HEK293 (cell line): ENCODE measurements at regions of chr22 and their contacts with region 1.

Region 1: GRCh38 chr22:24768537-24769374 is 5.8 kb downstream of the PIWIL3 start:
- H3K4me3 ChIP-seq: no peak overlapping the region
- H3K27ac ChIP-seq: no peak overlapping the region
- H3K4me1 ChIP-seq: no peaks in the 10 kb centered on the region
- CTCF ChIP-seq: no peak

Region 2: GRCh38 chr22:24744638-24745037 is 24.1 kb before region 1 on chr22:
- CTCF ChIA-PET with region 1: no interaction called
- POLR2A ChIA-PET with region 1: no interaction called
- H3K4me3 ChIP-seq: no peak overlapping the region
- H3K27ac ChIP-seq: no peak overlapping the region
- H3K4me1 ChIP-seq: no peaks in the 10 kb centered on the region
- CTCF ChIP-seq: no peak

Region 3: DNA sequence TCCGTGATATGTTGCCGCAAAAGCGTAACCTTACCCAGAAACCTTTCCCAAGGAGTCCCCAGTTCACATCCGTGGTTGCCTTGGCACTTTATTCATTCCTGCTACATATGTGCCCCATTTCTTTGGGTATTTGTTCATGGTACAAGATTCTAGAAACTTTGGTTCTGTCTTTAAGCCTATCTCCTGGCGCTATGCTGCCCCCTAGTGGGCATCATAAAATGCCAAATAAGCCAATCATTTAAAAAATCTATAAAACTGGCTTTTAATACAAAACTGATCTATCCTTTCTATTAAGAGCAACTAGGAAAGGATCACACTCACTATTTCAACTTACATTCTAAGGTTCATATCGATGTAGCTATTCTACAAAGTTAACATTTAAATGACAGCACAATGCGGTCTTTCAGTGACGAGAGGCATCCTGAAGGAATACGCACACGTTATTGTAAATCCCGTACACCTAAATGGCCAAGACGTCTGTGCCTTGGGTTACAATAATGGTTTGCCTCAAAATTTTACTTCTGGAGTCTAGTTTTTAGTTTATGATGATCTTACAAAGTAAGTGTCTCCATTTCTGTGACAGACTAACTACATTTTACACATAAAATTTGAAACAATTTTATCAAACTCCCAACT is 10.5 kb before region 1 on chr22:
- CTCF ChIA-PET with region 1: interaction called, 87 read pairs
- POLR2A ChIA-PET with region 1: no interaction called
- H3K4me3 ChIP-seq: no peak overlapping the region
- H3K27ac ChIP-seq: no peak overlapping the region
- H3K4me1 ChIP-seq: no peaks in the 10 kb centered on the region
- CTCF ChIP-seq: peak; percentile 51; the same call in 1 of the 2 replicates

Region 4: DNA sequence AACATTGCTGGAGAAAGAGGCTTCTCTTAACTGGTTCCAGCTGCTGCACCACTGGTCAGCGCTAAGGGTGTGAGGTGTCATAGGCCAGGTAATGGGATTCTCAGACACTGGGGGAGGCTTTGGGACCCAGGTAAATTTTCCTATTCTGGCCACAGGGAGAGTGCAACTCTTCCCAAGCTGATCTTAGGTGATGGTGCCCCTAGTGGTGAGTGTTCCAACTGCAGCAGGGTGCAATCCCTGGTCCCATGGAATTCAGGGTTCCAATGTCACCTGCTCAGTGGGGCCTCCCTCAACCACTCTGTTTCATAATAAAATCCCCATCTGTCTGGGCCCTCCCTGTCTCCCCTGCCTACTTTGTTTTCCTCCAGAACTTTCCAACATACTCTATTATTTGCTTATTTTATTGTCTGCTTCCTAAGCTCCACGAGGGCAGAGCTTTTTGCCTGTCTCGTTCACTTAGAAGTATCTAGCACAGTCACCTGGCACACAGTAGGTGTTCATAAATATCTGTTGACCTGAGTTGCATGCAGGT is 34.3 kb after region 1 on chr22:
- CTCF ChIA-PET with region 1: interaction called, 37 read pairs
- POLR2A ChIA-PET with region 1: interaction called, 3 read pairs
- H3K4me3 ChIP-seq: no peak overlapping the region
- H3K27ac ChIP-seq: no peak overlapping the region
- H3K4me1 ChIP-seq: no peaks in the 10 kb centered on the region
- CTCF ChIP-seq: peak; percentile 82

Region 5: GRCh38 chr22:24834845-24835570 is 66.3 kb after region 1 on chr22:
- CTCF ChIA-PET with region 1: interaction called, 20 read pairs
- POLR2A ChIA-PET with region 1: no interaction called
- H3K4me3 ChIP-seq: no peak overlapping the region
- H3K27ac ChIP-seq: no peak overlapping the region
- H3K4me1 ChIP-seq: no peaks in the 10 kb centered on the region
- CTCF ChIP-seq: peak; percentile 62

Region 6: DNA sequence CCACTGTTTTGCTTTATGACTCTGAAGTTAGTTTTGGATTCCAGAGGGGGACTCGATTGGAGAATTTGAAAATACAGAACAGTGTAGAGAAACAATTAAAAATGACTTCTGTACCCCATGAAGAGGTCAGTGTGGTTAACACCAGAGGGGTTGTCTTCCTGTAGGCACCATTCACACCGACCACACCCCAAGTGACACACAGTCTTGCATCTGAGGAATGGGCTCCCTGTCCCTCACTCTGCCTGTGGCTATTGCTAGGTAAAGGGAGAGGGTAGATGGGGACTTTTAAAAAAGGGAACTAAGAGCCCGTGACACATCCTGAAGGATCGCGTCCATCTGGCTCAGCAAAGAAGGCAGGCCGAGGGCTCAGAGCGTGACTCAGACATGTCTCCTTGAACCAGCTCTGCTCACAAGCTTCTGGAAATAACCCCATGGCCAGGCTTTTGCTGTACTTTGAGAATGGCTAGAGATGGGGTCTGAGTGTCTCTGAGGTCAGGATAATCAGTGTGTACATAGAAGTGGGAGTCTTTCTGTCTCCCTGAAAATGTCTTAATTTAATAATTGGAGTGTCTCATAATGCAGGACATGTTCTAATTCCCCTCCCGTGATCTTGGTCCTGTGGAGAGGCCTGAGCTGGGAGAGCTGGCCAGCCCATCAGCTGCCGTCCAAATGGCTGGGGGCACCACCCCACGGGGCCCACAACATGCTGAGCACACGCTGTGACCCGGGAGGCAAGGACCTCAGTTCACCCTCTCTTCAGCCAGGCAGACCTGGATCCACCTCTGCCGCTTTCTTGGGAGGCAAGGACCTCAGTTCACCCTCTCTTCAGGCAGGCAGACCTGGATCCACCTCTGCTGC is 76.5 kb after region 1 on chr22:
- CTCF ChIA-PET with region 1: interaction called, 121 read pairs
- POLR2A ChIA-PET with region 1: no interaction called
- H3K4me3 ChIP-seq: no peak overlapping the region
- H3K27ac ChIP-seq: no peak overlapping the region
- H3K4me1 ChIP-seq: no peaks in the 10 kb centered on the region
- CTCF ChIP-seq: no peak

Region 7: DNA sequence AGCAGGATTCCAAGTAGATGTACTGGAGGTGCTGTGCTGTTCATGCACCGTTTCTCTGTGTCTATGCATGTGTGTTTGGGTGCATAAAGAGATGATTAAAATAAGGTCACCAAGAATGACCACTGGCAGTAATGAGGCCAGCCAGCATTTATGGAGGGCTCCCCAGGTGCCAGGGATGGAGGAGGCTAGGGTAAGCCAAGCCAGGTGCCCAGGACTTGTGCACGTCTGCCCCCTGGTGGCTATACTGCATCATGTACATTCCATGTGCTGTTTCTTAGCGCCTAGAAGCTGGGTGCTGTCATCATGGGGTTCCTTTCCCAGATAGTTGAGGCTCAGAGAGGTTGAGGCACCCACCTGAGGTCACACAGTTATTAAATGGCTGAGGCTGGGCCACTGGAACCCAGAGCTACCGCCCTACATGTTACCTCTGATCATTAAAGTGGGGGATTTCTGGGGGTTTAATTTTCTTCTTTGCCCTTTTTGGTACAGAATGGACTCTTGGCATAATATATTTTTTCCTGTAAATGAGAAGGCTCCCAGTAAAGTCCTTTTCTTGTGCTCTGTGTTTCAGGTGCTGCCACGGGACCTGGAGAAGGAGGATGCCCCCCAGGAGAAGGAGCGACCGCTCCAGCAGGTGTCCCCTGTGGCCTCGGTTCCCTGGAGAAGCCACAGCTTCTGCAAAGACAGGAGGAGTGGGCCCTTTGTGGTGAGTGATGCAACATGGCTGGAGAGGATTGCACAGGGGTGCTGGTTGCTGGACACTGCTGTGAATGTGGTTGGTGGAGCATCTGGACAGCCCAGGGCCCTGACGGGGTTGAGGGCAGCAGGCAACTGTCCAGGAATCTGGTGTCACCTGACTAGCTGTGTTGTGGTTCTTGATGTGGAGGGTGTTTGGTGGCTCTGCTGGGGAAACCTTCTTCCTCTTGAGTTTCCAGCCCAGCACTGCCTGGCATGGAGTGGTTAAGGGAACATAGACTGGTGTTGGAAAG is 280.2 kb after region 1 on chr22:
- CTCF ChIA-PET with region 1: interaction called, 68 read pairs
- POLR2A ChIA-PET with region 1: no interaction called
- H3K4me3 ChIP-seq: no peak overlapping the region
- H3K27ac ChIP-seq: no peak overlapping the region
- H3K4me1 ChIP-seq: no peaks in the 10 kb centered on the region; the same call in 1 of the 2 replicates
- CTCF ChIP-seq: peak; percentile 68

Region 8: GRCh38 chr22:25057013-25057881 is 288.5 kb after region 1 on chr22:
- CTCF ChIA-PET with region 1: interaction called, 68 read pairs
- POLR2A ChIA-PET with region 1: no interaction called
- H3K4me3 ChIP-seq: no peak overlapping the region
- H3K27ac ChIP-seq: no peak overlapping the region
- H3K4me1 ChIP-seq: no peaks in the 10 kb centered on the region
- CTCF ChIP-seq: peak; percentile 92